Activated CD4-positive, alpha-beta memory T cell treated with anti-CD3 and anti-CD28 coated beads for 36 hours (primary cell): ENCODE measurements at regions of chr15 and their contacts with region 1.

Region 1: DNA sequence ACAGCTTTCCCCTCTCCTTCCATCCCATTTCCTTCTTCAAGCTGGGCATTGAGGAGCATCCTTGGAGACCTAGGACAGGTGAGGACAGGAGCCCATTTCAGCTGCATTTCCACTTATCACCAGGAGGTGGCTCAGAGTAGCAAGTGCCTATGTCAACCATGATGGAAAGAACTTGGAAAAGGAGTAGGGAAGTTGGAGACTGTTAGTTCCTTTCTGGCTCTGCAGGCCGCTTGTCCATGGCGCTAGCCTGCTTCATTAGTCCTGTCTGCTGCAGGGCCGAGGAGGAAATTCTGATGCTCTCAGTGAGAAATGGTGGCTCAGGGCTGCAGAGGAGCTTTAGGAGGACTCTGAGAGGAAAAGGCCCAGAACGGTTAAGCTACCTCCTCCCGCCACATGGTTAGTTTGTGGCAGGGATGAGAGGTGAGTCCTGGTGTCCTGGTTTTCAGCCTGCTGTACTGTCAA is 7.0 kb upstream of the CD276 start:
- DNase-seq: peak; percentile 60
- H3K4me3 Mint-ChIP-seq: no peak overlapping the region
- H3K27ac Mint-ChIP-seq: no peak overlapping the region
- H3K4me1 Mint-ChIP-seq: peaks cover 16% of the 10 kb centered on the region
- H3K27me3 Mint-ChIP-seq: peaks cover 25% of the 10 kb centered on the region

Region 2: GRCh38 chr15:73414876-73415275 is 262.3 kb before region 1 on chr15:
- CTCF ChIA-PET with region 1: no interaction called
- POLR2A ChIA-PET with region 1: no interaction called
- intact Hi-C with region 1: no loop called
- DNase-seq: no peak
- H3K4me3 Mint-ChIP-seq: no peak overlapping the region
- H3K27ac Mint-ChIP-seq: no peak overlapping the region
- H3K4me1 Mint-ChIP-seq: no peaks in the 10 kb centered on the region
- H3K27me3 Mint-ChIP-seq: peaks cover 10% of the 10 kb centered on the region

Region 3: GRCh38 chr15:73560501-73561117 is 116.6 kb before region 1 on chr15:
- CTCF ChIA-PET with region 1: interaction called, 14 read pairs
- POLR2A ChIA-PET with region 1: no interaction called
- intact Hi-C with region 1: no loop called
- DNase-seq: no peak
- H3K4me3 Mint-ChIP-seq: no peak overlapping the region
- H3K27ac Mint-ChIP-seq: no peak overlapping the region
- H3K4me1 Mint-ChIP-seq: no peaks in the 10 kb centered on the region
- H3K27me3 Mint-ChIP-seq: no peaks in the 10 kb centered on the region

Region 4: GRCh38 chr15:73650416-73651126 is 26.6 kb before region 1 on chr15:
- CTCF ChIA-PET with region 1: interaction called, 5 read pairs
- POLR2A ChIA-PET with region 1: no interaction called
- intact Hi-C with region 1: loop called (anchors 2 kb)
- DNase-seq: peak; percentile 37
- H3K4me3 Mint-ChIP-seq: no peak overlapping the region
- H3K27ac Mint-ChIP-seq: peak overlapping the region; percentile 34
- H3K4me1 Mint-ChIP-seq: peaks cover 17% of the 10 kb centered on the region
- H3K27me3 Mint-ChIP-seq: peaks cover 22% of the 10 kb centered on the region

Region 5: GRCh38 chr15:73660455-73660854 is 16.7 kb before region 1 on chr15:
- CTCF ChIA-PET with region 1: interaction called, 10 read pairs
- POLR2A ChIA-PET with region 1: no interaction called
- intact Hi-C with region 1: no loop called
- DNase-seq: no peak
- H3K4me3 Mint-ChIP-seq: no peak overlapping the region
- H3K27ac Mint-ChIP-seq: no peak overlapping the region
- H3K4me1 Mint-ChIP-seq: peaks cover 3% of the 10 kb centered on the region
- H3K27me3 Mint-ChIP-seq: peaks cover 18% of the 10 kb centered on the region

Region 6: DNA sequence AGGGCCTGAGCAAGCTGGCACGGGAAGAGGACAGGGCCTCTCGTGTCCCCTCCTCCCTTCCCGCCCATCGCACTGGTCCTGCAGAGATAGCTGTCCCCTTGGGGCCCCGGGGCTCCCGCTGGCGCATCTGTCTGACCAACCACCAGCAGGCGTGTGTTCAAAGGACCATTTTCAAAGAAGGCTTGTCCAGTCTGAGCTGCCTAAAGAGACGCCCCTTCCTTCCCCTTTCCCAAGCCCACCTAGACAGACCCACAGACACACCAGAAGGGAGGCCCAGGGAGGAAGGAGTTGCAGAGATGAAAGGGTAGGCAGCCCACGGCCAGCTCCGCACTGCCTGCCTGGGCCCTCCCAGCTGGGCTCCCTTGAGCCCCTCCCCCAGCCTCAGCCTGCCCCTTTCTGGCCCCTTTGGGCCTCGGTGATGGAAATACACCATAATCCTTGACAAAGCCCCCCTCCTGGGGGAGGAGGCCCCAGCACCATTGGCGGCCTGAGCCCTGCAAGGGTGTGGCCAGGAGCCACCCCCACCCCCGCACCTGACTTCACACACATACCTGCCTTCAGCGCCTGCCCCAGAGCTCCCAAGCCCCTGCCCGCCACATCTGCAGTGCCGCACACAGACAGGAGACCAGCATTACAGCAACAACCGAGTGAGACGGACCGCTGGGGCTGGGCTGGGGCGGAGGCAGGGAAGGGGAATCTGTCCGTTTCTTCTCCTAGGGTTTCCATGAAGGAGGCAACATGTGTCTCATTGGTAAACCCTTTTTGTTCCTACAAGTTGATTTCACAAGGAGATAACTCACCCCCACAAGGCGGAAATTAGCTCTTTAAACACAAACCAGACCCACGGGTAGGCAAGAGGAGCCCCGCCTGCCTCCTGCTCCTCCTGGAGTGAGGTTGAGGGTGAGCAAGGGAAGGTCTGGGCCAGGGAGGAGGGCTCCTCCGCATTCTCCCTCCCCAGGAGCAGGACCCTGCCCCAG is 525.6 kb after region 1 on chr15 and contains the start of gene STRA6:
- CTCF ChIA-PET with region 1: no interaction called
- POLR2A ChIA-PET with region 1: no interaction called
- intact Hi-C with region 1: no loop called
- DNase-seq: no peak
- H3K4me3 Mint-ChIP-seq: no peak within 1 kb of the TSS
- H3K27ac Mint-ChIP-seq: no peak within 1 kb of the TSS
- H3K4me1 Mint-ChIP-seq: no peaks in the 10 kb centered on the region
- H3K27me3 Mint-ChIP-seq: peaks cover 10% of the 10 kb centered on the region
- total RNA-seq, gene STRA6: not detected